ENCODE measurements at regions of chr11 and their contacts with region 1.

Region 1: GRCh38 chr11:103108933-103109817 is at the start of gene DYNC2H1:
- DNase-seq: peak; percentile 86
- H3K4me3 ChIP-seq: peak within 1 kb of the TSS; percentile 86
- H3K27ac ChIP-seq: peak within 1 kb of the TSS; percentile 81
- H3K27me3 ChIP-seq: no peaks in the 10 kb centered on the region
- CTCF ChIP-seq: peak; percentile 57
- polyA plus RNA-seq, gene DYNC2H1: 20.6 and 25.3 TPM in 2 replicates

Region 2: GRCh38 chr11:103070142-103070541 is 39.0 kb before region 1 on chr11:
- CTCF ChIA-PET with region 1: interaction called, 10 read pairs
- POLR2A ChIA-PET with region 1: no interaction called
- DNase-seq: no peak
- H3K4me3 ChIP-seq: no peak overlapping the region
- H3K27ac ChIP-seq: no peak overlapping the region
- H3K27me3 ChIP-seq: no peaks in the 10 kb centered on the region
- CTCF ChIP-seq: no peak

Region 3: GRCh38 chr11:103091801-103092524 is 17.2 kb before region 1 on chr11 and contains the start of gene DCUN1D5:
- CTCF ChIA-PET with region 1: interaction called, 22 read pairs
- POLR2A ChIA-PET with region 1: interaction called, 28 read pairs
- DNase-seq: peak; percentile 85
- H3K4me3 ChIP-seq: peak within 1 kb of the TSS; percentile 80
- H3K27ac ChIP-seq: peak within 1 kb of the TSS; percentile 77
- H3K27me3 ChIP-seq: no peaks in the 10 kb centered on the region
- CTCF ChIP-seq: no peak
- polyA plus RNA-seq, gene DCUN1D5: 53.1 and 62.3 TPM in 2 replicates

Measured in AG04450 (cell line).